CD8-positive, alpha-beta T cell (primary cell): ENCODE measurements at regions of chr9 and their contacts with region 1.

Region 1: DNA sequence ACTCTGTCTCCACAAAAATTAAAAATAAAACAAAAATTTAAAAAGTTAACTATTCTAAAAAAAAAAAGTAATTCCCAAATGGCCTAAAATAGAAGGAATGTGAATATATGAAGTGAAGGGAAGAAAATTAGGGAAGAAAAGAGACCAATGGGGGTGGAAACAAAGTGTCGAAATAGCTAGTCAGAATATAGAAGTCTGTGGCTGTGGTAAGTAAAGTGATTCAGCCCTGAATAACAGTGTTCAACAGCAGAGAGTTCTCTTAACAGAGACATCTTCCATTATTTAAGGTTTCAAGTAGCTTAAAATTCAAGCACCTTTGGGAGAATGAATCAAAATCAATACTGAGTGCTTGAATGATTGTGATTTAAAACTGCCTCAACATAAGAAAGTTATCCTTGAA is 51.7 kb downstream of the LPAR1 start:
- DNase-seq: no peak
- ATAC-seq: no peak
- H3K4me3 ChIP-seq: no peak overlapping the region
- H3K4me3 Mint-ChIP-seq: no peak overlapping the region
- H3K27ac ChIP-seq: no peak overlapping the region
- H3K27ac Mint-ChIP-seq: no peak overlapping the region
- H3K4me1 ChIP-seq: no peaks in the 10 kb centered on the region
- H3K4me1 Mint-ChIP-seq: no peaks in the 10 kb centered on the region
- H3K27me3 ChIP-seq: no peaks in the 10 kb centered on the region
- H3K27me3 Mint-ChIP-seq: no peaks in the 10 kb centered on the region
- CTCF ChIP-seq: no peak

Region 2: DNA sequence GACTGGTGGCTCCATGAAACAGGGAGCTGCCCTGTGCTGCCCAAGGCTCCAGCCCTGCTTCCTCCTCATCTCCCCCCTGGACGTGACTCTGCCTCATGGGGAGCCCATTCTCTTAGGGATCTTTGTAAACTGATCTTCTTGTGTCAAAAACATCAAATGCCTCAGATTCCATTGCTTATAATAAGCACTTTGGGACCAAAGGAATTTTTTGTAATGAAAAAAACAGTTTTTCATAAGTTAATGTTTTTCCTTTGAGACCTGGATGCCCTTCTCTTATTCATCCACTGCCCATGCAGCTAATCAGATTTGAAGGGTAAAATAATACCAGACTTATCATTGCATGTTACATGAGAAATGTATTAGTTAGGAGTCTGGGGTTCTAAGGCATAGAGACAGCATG is 1164.8 kb before region 1 on chr9:
- CTCF ChIA-PET with region 1: no interaction called
- POLR2A ChIA-PET with region 1: no interaction called
- intact Hi-C with region 1: loop called in 1 of 2 experiments (anchors 10 kb)
- DNase-seq: no peak
- ATAC-seq: no peak
- H3K4me3 ChIP-seq: no peak overlapping the region
- H3K4me3 Mint-ChIP-seq: no peak overlapping the region
- H3K27ac ChIP-seq: no peak overlapping the region
- H3K27ac Mint-ChIP-seq: no peak overlapping the region
- H3K4me1 ChIP-seq: no peaks in the 10 kb centered on the region
- H3K4me1 Mint-ChIP-seq: no peaks in the 10 kb centered on the region
- H3K27me3 ChIP-seq: no peaks in the 10 kb centered on the region
- H3K27me3 Mint-ChIP-seq: peaks cover 14% of the 10 kb centered on the region
- CTCF ChIP-seq: no peak